Activated CD8-positive, alpha-beta T cell treated with anti-CD3 and anti-CD28 coated beads, Interleukin-2, amount 10 ng/mL, durations not matched to agents 7 days and 5 days (primary cell): ENCODE measurements at regions of chr10 and their contacts with region 1.

Region 1: DNA sequence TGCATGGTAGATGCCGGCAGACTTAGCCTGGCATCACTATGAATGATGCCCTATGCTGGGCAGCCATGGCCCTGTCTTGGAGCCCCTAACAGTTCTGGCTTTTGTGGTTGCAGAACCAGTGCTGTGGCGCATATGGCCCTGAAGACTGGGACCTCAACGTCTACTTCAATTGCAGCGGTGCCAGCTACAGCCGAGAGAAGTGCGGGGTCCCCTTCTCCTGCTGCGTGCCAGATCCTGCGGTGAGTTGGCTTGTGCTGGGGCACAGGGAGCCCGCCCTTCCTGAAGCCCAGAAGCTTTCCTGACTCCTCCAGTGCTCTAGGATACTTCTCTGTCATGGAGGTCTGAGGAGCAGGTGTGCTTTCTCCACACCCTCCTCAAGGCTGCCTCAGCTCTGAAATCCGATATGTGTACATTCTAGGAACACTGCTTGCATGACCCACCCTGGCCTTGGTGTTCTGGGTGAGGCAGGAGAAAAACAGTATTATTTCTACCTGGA is 25.6 kb upstream of the SH2D4B start:
- DNase-seq: no peak
- ATAC-seq: no peak
- H3K4me3 Mint-ChIP-seq: peak overlapping the region; percentile 40
- H3K27ac Mint-ChIP-seq: peak overlapping the region; percentile 91
- H3K4me1 Mint-ChIP-seq: peaks cover 49% of the 10 kb centered on the region
- H3K27me3 Mint-ChIP-seq: no peaks in the 10 kb centered on the region

Region 2: GRCh38 chr10:80431577-80431976 is 80.5 kb before region 1 on chr10:
- CTCF ChIA-PET with region 1: no interaction called
- POLR2A ChIA-PET with region 1: no interaction called
- DNase-seq: no peak
- ATAC-seq: no peak
- H3K4me3 Mint-ChIP-seq: no peak overlapping the region
- H3K27ac Mint-ChIP-seq: no peak overlapping the region
- H3K4me1 Mint-ChIP-seq: no peaks in the 10 kb centered on the region
- H3K27me3 Mint-ChIP-seq: no peaks in the 10 kb centered on the region

Region 3: GRCh38 chr10:80498833-80499741 is 13.0 kb before region 1 on chr10:
- CTCF ChIA-PET with region 1: interaction called, 32 read pairs
- POLR2A ChIA-PET with region 1: interaction called, 8 read pairs
- DNase-seq: peak; percentile 71
- ATAC-seq: peak; percentile 70
- H3K4me3 Mint-ChIP-seq: peak overlapping the region; percentile 64
- H3K27ac Mint-ChIP-seq: peak overlapping the region; percentile 90
- H3K4me1 Mint-ChIP-seq: peaks cover 97% of the 10 kb centered on the region
- H3K27me3 Mint-ChIP-seq: no peaks in the 10 kb centered on the region

Region 4: DNA sequence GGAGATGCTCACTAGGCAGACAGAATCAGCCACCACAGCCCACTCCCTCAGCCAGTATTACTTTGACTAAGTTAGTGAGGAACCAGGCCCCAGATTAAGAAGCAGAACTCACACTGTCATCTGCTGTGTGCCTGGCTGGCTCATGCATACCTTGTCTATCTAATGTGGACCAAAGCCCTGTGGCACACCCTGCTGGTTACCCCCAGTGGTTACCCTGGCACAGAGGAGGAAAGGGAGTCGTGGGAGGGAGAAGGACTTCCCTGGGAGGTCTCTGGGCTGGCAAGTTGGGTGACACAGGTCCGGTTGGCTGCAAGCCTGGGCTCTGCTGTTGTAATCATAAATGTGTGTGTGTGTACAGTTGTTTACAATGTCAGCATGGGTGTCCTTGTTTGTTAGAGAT is 18.2 kb after region 1 on chr10:
- CTCF ChIA-PET with region 1: interaction called, 31 read pairs
- POLR2A ChIA-PET with region 1: interaction called, 7 read pairs
- DNase-seq: peak; percentile 69
- ATAC-seq: peak; percentile 61
- H3K4me3 Mint-ChIP-seq: peak overlapping the region; percentile 61
- H3K27ac Mint-ChIP-seq: peak overlapping the region; percentile 97
- H3K4me1 Mint-ChIP-seq: peaks cover 76% of the 10 kb centered on the region
- H3K27me3 Mint-ChIP-seq: no peaks in the 10 kb centered on the region

Region 5: GRCh38 chr10:80535671-80536365 is 23.7 kb after region 1 on chr10:
- CTCF ChIA-PET with region 1: interaction called, 31 read pairs
- POLR2A ChIA-PET with region 1: interaction called, 7 read pairs
- DNase-seq: peak; percentile 81
- ATAC-seq: peak; percentile 89
- H3K4me3 Mint-ChIP-seq: peak overlapping the region; percentile 86
- H3K27ac Mint-ChIP-seq: peak overlapping the region; percentile 97
- H3K4me1 Mint-ChIP-seq: peaks cover 56% of the 10 kb centered on the region
- H3K27me3 Mint-ChIP-seq: no peaks in the 10 kb centered on the region

Region 6: DNA sequence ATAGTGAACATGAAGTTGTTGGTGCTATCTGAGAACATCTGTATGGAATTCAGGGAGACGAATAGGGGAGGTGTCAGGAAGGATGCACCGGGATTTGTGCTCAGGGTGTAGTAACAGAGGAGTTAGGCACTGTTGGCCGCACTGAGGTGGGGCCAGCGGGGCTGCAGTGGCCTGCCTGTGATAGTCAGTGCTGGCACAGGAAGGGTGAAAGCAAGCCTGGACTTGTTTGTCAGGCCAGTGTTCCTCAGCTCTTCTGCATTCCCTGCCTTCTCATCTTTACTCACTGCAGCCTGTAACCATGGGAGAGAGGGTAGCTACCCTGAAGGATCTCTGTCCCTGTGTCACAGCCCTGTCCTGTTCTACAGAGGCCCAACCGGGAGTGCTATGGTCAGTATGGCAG is 107.0 kb after region 1 on chr10:
- CTCF ChIA-PET with region 1: no interaction called
- POLR2A ChIA-PET with region 1: no interaction called
- DNase-seq: no peak
- ATAC-seq: no peak
- H3K4me3 Mint-ChIP-seq: no peak overlapping the region
- H3K27ac Mint-ChIP-seq: no peak overlapping the region
- H3K4me1 Mint-ChIP-seq: no peaks in the 10 kb centered on the region
- H3K27me3 Mint-ChIP-seq: peaks cover 3% of the 10 kb centered on the region

Region 7: DNA sequence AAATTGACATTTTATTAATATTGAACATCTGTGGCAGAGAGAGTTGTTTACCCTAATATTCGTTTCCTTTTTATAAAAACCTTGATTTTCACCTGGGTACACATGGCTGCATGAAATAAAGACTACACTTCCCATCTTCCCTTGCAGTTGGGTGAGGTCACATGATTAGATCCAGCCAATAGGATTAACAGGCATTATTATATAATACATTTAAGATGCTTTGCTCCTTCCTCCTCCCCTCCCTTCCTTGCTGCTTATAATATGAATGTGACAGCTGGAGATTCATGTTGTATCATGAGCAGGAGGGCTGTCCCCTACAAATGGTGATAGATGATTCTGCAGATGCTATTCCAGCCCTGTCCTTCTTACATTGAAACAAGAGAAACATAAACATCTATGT is 172.2 kb after region 1 on chr10:
- CTCF ChIA-PET with region 1: no interaction called
- POLR2A ChIA-PET with region 1: no interaction called
- DNase-seq: no peak
- ATAC-seq: no peak
- H3K4me3 Mint-ChIP-seq: no peak overlapping the region
- H3K27ac Mint-ChIP-seq: no peak overlapping the region
- H3K4me1 Mint-ChIP-seq: no peaks in the 10 kb centered on the region
- H3K27me3 Mint-ChIP-seq: no peaks in the 10 kb centered on the region